Colonic mucosa (tissue), 4 donors: ENCODE measurements at regions of chr7 and their contacts with region 1.

Region 1: GRCh38 chr7:152354066-152354465 is 81.7 kb downstream of the KMT2C start:
- DNase-seq: no peak
- H3K4me3 ChIP-seq: no peak overlapping the region
- H3K27ac ChIP-seq: no peak overlapping the region
- H3K4me1 ChIP-seq: no peaks in the 10 kb centered on the region
- H3K27me3 ChIP-seq: no peaks in the 10 kb centered on the region
- CTCF ChIP-seq: no peak

Region 2: GRCh38 chr7:152463709-152464311 is 109.7 kb after region 1 on chr7:
- intact Hi-C with region 1: loop called (anchors 10 kb)
- DNase-seq: peak; percentile 100
- H3K4me3 ChIP-seq: peak overlapping the region; percentile 92
- H3K27ac ChIP-seq: peak overlapping the region; percentile 100
- H3K4me1 ChIP-seq: no peaks in the 10 kb centered on the region
- H3K27me3 ChIP-seq: no peaks in the 10 kb centered on the region
- CTCF ChIP-seq: no peak

Region 3: DNA sequence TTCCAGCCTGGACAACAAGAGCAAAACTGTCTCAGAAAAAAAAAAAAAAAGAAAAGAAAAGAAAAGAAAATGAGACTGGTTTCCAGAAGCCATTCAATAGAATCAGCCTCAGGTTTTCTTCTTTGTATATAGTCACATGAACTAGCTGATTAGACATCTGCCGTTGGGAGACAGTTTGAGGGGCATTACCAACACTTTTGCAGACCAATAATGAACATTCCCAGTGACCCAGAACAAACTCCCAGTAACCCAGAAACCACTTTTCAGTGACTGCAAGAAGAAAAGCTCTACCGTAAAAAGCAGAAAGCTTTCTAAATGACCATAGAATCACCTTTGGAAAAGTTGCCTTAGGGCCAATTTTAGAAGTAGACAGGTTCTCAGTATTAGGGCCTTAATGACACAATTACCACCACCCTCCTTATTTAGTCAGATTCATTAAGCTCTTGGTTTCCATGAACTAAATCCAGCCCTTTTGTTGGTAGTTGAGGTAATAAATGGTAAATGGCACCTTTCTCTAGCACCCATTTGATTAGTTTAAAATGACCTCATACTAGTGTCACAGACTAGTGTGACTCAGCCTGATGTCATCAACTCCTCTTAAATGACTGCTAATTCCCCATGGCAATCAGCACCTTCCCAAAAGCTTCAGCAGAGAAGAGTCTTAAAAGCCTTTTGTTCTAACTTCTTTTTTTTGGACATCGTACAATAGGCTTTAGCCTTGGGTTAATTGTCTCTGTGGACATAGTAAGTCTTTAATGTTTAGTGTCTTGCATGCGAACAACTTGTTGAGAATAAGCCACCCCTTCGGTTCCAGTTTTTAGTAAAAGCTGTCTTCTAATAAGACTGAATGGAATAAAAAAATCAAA is 355.5 kb after region 1 on chr7:
- intact Hi-C with region 1: no loop called
- DNase-seq: no peak
- H3K4me3 ChIP-seq: no peak overlapping the region
- H3K27ac ChIP-seq: no peak overlapping the region
- H3K4me1 ChIP-seq: no peaks in the 10 kb centered on the region
- H3K27me3 ChIP-seq: no peaks in the 10 kb centered on the region
- CTCF ChIP-seq: no peak